Gastrocnemius medialis (tissue), 4 donors: ENCODE measurements at regions of chr1 and their contacts with region 1.

Region 1: DNA sequence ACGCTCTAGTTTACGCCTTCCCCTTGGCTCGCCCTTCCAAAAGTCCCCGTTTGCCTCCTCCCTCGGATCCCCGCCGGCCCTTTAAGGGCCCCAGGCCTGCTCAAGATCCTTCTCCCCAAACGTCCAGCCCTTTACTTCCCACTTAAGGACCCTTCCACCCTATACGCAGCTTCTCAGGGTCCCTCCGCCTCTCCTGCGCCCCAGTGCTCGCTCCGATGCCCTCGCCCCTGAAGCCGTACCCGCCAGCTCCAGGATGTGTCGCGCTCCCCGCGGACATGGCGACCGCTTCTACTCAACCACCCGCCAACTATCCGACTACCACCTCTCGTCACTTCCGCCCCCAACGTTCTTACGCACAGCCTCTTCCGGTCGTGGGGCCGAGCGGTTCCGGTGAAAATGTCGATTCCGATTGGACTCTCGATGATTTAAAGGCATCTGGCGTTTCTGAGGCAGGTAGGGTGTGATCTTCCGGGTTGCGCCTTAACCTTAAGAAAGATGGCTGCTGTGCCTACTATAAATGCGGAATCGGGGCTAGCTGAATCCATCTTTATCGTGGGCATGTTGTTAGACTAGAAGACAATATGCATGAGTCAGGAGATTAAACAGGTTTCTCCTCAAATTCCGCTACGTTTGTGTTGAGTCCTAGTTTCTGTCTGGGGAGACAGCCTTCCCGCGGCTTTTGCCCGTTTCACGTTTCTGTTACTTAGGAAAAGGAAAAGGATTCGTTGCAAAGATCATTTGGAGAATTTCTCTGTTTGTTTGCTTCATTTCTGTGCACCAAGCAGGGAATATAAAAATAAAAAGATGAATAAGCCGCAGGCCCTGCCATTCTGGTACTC is at the start of gene KHDC4:
- DNase-seq: peak; percentile 95 to 96
- ATAC-seq: peak; percentile 99 to 100
- H3K4me3 ChIP-seq: peak within 1 kb of the TSS; percentile 85 to 96 (median 90)
- H3K27ac ChIP-seq: peak within 1 kb of the TSS; percentile 93 to 95 (median 94)
- H3K4me1 ChIP-seq: peaks cover 47 to 51% of the 10 kb centered on the region in 2 donors
- H3K27me3 ChIP-seq: no peaks in the 10 kb centered on the region
- CTCF ChIP-seq: peak in 3 of 5 experiments; percentile 24 to 36 (median 26)
- POLR2A ChIP-seq: peak; percentile 91 to 96
- total RNA-seq, gene KHDC4: 18.2 to 46.3 (median 26.3) TPM

Region 2: DNA sequence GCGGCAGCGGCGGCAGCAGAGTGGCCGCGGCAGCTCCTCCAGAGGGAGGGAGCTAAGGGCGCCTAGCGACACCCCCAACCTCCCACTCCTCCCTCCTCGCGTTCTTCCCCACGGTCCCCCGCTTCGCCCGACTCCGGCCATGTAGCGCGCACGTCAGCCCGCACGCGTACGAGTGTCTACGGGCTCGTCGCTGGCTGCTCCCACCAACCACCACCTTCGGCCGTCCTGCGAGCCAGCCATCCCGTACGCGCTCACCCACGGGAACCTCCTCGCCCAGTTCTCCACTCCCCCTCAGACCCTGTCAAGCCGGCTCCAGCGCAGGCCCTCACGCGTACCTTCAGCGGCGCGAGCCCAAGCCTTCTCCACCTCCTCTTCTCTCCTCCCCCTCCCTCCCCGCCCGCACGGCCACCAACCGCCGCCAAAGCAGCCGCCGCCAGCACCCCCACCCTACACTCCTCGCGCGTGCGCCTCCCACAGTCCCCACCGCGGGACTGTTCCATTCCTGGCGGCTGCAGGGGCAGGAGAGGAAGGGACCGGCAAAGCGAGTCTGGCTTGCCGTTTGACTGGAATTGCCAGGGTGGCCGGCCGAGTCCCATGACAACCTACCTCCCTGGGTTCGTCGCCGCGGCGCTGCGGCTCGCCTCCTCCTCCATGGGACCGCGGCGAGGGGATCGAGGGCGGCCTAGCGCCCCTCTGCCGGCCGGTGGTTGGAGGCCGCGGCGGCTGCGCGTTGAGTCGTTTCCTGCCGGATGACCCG is 245.8 kb before region 1 on chr1 and contains the start of gene YY1AP1:
- in situ Hi-C with region 1: no loop called
- intact Hi-C with region 1: loop called (anchors 10 kb)
- DNase-seq: peak; percentile 89 to 91
- ATAC-seq: peak; percentile 90 to 91
- H3K4me3 ChIP-seq: peak within 1 kb of the TSS; percentile 78 to 99 (median 96)
- H3K27ac ChIP-seq: peak within 1 kb of the TSS; percentile 94 to 99 (median 96)
- H3K4me1 ChIP-seq: peaks cover 45 to 46% of the 10 kb centered on the region in 2 donors
- H3K27me3 ChIP-seq: no peaks in the 10 kb centered on the region
- CTCF ChIP-seq: peak in 3 of 5 experiments; percentile 14 to 29 (median 29)
- POLR2A ChIP-seq: peak; percentile 93 to 94
- total RNA-seq, gene YY1AP1: 81.6 to 162 (median 120) TPM

Region 3: DNA sequence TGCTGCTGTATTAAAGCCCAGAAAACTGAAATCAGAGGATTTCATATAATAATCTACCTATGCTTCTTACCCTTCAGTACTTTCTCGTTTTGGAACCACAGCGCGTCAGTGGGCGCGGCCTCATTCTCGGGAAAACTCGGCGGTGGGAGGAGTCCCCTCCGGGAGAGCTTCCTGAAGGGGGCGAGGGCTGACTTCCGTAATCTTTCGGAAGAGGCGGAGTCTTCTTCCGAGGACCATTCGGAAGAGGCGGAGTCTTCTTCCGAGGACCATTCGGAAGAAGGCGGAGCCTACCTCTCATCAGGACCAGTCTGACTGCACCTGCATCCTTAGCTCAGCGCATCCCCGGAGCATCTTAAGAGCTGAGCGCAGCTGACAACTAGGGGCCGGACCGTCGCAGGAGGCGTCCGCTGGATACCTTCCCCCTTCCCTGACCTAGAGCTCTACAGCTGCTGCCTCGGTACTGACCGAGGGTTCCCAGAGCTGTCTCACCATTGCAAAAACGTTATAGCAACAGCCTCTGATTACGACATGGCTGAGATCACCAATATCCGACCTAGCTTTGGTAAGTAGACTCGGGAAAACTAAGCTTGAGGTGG is 75.0 kb before region 1 on chr1 and contains the start of gene SYT11:
- in situ Hi-C with region 1: no loop called
- intact Hi-C with region 1: loop called (anchors 1 kb)
- DNase-seq: peak; percentile 90 to 92
- ATAC-seq: peak; percentile 94 to 98
- H3K4me3 ChIP-seq: peak within 1 kb of the TSS; percentile 60 to 75 (median 62)
- H3K27ac ChIP-seq: peak within 1 kb of the TSS; percentile 84 to 92 (median 89)
- H3K4me1 ChIP-seq: peaks cover 26 to 30% of the 10 kb centered on the region in 2 donors
- H3K27me3 ChIP-seq: no peaks in the 10 kb centered on the region
- CTCF ChIP-seq: no peak
- POLR2A ChIP-seq: peak in 1 of 2 donors; percentile 23
- total RNA-seq, gene SYT11: 2.4 to 5.3 (median 3.1) TPM

Region 4: DNA sequence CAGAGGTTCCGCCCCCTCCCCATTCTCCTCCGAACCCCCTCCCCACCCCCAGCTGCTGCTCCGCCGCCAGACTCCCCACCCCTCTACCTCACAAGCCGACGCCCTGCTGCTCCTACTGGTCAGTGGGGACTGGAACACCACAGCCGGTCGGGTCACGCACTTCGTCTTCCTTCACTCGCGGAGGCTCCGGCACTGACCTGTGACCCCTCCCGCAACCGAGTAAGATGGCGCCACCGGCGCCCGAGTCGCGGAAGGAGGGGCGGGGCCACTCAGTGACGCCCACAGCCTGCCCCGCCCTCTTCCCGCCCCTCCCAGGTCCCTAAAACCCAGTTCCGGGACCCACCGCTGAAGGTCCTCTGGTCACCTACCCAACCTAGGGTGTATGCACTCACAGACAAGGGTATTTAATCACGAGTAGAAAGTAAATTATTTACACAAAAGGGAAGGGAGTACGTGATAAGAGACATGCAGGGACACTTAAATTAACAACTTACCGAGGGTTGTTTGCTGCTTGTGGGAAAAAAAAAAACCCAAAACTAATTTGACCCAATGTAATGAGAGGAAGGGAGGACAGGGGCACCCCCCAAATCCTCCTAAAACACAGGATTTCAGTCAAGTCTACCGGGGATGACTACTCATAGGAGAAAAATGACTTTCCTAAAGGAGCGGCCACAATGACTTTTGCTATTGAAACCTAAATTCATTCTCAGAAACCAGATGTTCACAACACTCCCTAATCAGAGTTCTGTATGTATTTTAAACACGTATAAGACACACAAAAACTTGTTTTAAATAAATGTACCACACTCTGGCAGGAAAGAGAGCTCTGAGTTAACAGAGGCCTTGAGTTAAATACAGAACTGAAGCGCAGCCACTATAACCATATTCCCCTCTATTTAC is 22.9 kb before region 1 on chr1 and contains the start of gene RIT1:
- in situ Hi-C with region 1: no loop called
- intact Hi-C with region 1: loop called (anchors 1 kb)
- DNase-seq: peak; percentile 72 to 84
- ATAC-seq: peak; percentile 93 to 95
- H3K4me3 ChIP-seq: peak within 1 kb of the TSS; percentile 73 to 99 (median 83)
- H3K27ac ChIP-seq: peak within 1 kb of the TSS; percentile 89 to 96 (median 93)
- H3K4me1 ChIP-seq: peaks cover 8 to 16% of the 10 kb centered on the region in 2 donors
- H3K27me3 ChIP-seq: no peaks in the 10 kb centered on the region
- CTCF ChIP-seq: peak in 2 of 5 experiments; percentile 20 to 35
- POLR2A ChIP-seq: peak; percentile 59 to 65
- total RNA-seq, gene RIT1: 9.6 to 16.8 (median 15.2) TPM

Region 5: DNA sequence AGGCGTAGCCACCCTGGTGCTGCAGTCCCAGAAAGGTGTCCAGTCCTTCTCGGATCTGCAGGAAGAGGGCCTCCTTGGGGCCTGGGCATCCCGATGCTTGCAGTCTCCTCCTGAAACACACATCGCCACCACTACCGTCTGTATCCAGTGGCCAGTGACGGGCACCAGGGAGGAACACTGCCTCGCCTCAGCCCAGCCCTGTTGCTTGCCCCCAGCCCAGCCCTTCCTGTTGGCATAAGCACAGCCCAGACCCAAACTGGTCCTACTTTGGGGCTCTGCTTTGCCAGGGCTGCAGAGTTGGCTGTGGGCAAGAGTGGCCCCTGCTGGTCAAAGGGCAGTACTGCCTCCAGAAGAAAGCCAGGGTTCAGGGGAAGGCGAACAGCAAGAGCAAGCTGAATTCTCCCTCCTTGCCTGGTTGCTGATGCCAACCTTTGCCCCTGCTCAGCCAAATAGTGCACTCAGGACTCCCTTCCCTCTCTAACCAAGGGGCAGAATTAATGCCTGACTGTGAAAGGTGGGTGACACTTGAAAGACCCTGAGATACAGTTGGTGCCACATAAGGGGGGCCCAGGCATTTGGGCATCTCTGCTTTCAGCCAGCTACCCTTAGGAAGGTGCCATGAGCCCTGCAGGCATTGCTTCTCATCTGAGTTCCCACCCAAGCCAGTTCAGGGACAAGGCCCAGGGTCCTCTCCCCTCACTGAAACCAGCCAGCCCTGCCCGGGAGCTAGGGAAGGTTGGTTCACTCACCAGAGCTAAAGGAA is 55.1 kb after region 1 on chr1:
- in situ Hi-C with region 1: loop called (anchors 5 kb)
- intact Hi-C with region 1: loop called (anchors 1 kb)
- DNase-seq: peak; percentile 42 to 67
- ATAC-seq: peak; percentile 89 to 95
- H3K4me3 ChIP-seq: peak overlapping the region; percentile 26 to 44 (median 40)
- H3K27ac ChIP-seq: peak overlapping the region in 2 of 4 donors; percentile 22 to 35
- H3K4me1 ChIP-seq: peaks cover 3 to 7% of the 10 kb centered on the region in 2 donors
- H3K27me3 ChIP-seq: no peaks in the 10 kb centered on the region
- CTCF ChIP-seq: peak; percentile 98 to 99 (median 99)
- POLR2A ChIP-seq: no peak

Region 6: DNA sequence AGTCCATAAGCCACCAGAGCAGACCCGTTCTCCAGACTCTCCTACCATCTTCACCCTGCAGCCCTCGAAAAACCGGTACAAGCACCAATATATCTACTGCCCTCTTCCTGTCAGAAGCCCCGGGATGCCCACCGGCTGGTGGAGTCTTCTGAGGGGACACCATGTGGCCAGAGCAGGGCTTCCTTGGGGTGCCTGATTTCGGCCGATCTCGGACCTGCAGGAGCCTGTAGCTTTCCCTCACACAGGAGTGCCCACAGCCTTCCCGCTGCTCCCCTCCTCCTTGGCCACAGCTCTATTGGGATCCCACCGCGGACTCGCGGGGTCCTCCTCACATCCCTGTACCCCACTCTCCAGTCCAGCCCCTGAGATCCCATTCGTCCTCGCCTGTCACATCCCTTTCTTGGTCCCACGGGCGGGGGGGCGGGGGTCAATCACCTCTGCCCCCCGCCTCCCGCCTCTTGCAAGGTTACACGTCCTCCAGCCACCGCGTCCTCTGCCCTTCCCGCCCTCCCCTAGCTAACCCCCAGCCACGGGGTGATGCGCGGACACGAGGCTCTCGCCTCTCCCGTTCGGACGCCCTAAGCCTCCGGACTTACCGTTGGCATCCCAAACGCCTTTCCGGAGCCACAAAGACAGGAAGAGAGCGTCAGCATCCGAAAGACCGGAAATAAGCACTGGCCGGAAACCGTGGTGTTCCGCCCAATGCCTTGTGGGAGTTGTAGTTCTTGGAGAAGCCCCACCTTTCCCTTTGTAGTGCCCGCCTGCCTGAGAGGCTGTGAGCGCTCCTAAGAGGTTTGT is 86.2 kb after region 1 on chr1 and contains the start of gene SSR2:
- in situ Hi-C with region 1: no loop called
- intact Hi-C with region 1: no loop called
- DNase-seq: peak; percentile 86 to 87
- ATAC-seq: peak; percentile 100
- H3K4me3 ChIP-seq: peak within 1 kb of the TSS; percentile 72 to 94 (median 91)
- H3K27ac ChIP-seq: peak within 1 kb of the TSS; percentile 86 to 90 (median 88)
- H3K4me1 ChIP-seq: peaks cover 8 to 10% of the 10 kb centered on the region in 2 donors
- H3K27me3 ChIP-seq: no peaks in the 10 kb centered on the region
- CTCF ChIP-seq: no peak
- POLR2A ChIP-seq: peak in 1 of 2 donors; percentile 39
- total RNA-seq, gene SSR2: 70.6 to 118 (median 108) TPM

Region 7: GRCh38 chr1:156054500-156055280 is 120.4 kb after region 1 on chr1 and contains the start of gene LAMTOR2:
- in situ Hi-C with region 1: no loop called
- intact Hi-C with region 1: loop called (anchors 2 kb)
- DNase-seq: peak; percentile 98
- ATAC-seq: peak; percentile 82 to 87
- H3K4me3 ChIP-seq: peak within 1 kb of the TSS; percentile 91 to 95 (median 92)
- H3K27ac ChIP-seq: peak within 1 kb of the TSS; percentile 92 to 99 (median 98)
- H3K4me1 ChIP-seq: peaks cover 17 to 26% of the 10 kb centered on the region in 2 donors
- H3K27me3 ChIP-seq: no peaks in the 10 kb centered on the region
- CTCF ChIP-seq: no peak
- POLR2A ChIP-seq: peak; percentile 69 to 80
- total RNA-seq, gene LAMTOR2: 51.5 to 82.7 (median 72.6) TPM

Region 8: DNA sequence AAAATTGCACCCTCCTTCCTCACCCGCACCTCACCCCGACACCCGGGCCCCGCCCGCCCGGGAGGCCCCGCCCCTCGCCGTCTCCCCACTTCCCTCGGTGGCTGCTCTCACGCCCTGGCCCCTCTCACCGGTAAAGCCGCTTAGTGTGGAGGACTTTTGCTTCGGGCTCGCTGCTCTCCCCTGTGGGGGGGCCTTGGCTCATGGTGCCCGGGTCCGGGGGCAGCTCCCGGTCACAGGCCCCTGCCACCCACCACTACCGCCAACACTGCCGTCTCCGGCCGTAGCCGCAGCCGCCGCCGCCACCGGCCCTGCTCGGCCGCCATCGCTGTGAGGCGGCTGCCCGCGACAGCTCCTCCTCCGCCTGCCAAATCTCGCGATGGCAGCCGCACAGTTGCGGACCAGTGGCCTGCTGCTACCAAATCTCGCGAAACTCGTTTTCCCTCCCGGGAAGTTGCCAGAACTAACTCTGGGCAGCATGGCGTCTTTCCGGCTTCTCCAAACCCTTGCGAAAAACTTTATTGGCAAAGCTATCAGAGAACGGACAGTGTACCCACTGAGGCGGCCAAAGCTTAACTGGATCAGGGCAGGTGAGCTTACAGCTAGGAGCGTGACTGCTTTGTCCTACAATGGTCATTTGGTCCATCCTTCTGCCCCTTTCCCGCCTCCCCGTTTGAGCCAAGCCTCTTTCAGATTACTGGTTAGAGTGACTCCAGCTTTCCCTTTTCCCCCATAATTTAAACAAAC is 348.3 kb after region 1 on chr1 and contains the start of gene SMG5:
- in situ Hi-C with region 1: no loop called
- intact Hi-C with region 1: loop called (anchors 2 kb)
- DNase-seq: peak; percentile 97
- ATAC-seq: peak; percentile 87 to 90
- H3K4me3 ChIP-seq: peak within 1 kb of the TSS; percentile 72 to 97 (median 82)
- H3K27ac ChIP-seq: peak within 1 kb of the TSS; percentile 90 to 99 (median 94)
- H3K4me1 ChIP-seq: peaks cover 27 to 33% of the 10 kb centered on the region in 2 donors
- H3K27me3 ChIP-seq: no peaks in the 10 kb centered on the region
- CTCF ChIP-seq: no peak
- POLR2A ChIP-seq: peak; percentile 91 to 95
- total RNA-seq, gene SMG5: 47.4 to 83.1 (median 62.7) TPM